ENCODE measurements at regions of chr12 and their contacts with region 1.

Region 1: GRCh38 chr12:121005346-121005815 is 10.9 kb downstream of the C12orf43 start:
- DNase-seq: peak; percentile 84
- ATAC-seq: peak; percentile 78
- H3K4me3 Mint-ChIP-seq: no peak overlapping the region
- H3K27ac Mint-ChIP-seq: peak overlapping the region; percentile 87
- H3K4me1 Mint-ChIP-seq: peaks cover 2% of the 10 kb centered on the region; the same call in 1 of the 2 replicates
- H3K27me3 Mint-ChIP-seq: no peaks in the 10 kb centered on the region
- CTCF ChIP-seq: peak; percentile 80

Region 2: DNA sequence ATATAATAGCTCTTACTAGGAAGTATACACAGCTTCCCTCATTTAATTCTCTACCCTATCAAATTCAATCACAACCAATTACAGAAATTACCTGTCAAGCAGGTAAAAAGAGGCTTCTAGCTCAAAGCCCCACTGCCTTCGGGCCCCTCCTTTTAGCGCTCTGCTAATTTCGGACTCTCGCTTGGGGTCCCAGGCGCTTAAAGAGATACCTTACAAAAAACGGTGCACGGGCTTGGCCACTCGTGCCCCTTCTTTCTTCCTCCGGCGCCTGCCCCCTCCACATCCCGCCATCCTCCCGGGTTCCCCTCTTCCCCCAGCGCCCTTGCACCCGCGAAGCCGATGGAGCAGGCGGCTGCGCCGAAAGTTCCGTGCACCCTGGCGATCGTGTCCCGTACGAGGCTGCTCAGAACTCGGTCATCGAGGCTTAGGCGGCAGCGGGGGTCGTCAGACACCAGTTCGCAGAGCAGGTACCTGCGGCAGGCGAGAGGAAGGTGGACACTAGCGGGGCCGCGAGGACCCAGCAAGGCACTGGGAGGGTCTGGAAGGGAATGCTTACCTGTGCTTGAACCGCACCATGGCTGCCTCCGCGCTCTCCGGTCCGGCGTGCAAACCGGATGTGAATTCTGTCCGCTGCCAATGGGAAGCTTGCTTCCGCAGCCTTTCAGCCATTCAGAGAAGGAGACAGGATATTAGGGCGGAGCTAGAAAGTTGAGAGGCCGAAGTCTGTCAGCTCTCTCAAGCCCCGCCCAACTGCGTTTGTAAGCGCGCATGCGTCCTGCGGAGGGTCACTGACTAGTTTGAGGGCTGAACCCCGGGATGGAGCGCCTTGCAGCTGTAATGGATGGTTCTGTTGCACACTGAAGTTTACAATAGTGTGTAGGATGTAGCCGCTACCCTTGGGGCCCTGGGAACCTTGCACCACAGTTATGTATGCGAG is 424.3 kb before region 1 on chr12 and contains the start of gene POP5:
- CTCF ChIA-PET with region 1: interaction called, 24 read pairs
- POLR2A ChIA-PET with region 1: no interaction called
- DNase-seq: peak; percentile 98
- ATAC-seq: peak; percentile 91
- H3K4me3 Mint-ChIP-seq: peak within 1 kb of the TSS; percentile 100
- H3K27ac Mint-ChIP-seq: peak within 1 kb of the TSS; percentile 95
- H3K4me1 Mint-ChIP-seq: peaks cover 24% of the 10 kb centered on the region
- H3K27me3 Mint-ChIP-seq: peaks cover 12% of the 10 kb centered on the region
- CTCF ChIP-seq: no peak
- total RNA-seq, gene POP5: 53.9 to 57.7 TPM (median 54.7 TPM) in 3 replicates

Region 3: GRCh38 chr12:120737557-120738251 is 267.7 kb before region 1 on chr12:
- CTCF ChIA-PET with region 1: interaction called, 20 read pairs
- POLR2A ChIA-PET with region 1: no interaction called
- DNase-seq: peak; percentile 69
- ATAC-seq: peak; percentile 92
- H3K4me3 Mint-ChIP-seq: no peak overlapping the region
- H3K27ac Mint-ChIP-seq: no peak overlapping the region
- H3K4me1 Mint-ChIP-seq: no peaks in the 10 kb centered on the region
- H3K27me3 Mint-ChIP-seq: no peaks in the 10 kb centered on the region
- CTCF ChIP-seq: peak; percentile 43; the same call in 1 of the 2 replicates

Region 4: GRCh38 chr12:120978296-120979219 is 26.8 kb before region 1 on chr12 and contains the start of gene HNF1A:
- CTCF ChIA-PET with region 1: interaction called, 35 read pairs
- POLR2A ChIA-PET with region 1: interaction called, 4 read pairs
- DNase-seq: no peak
- ATAC-seq: peak; percentile 17; the same call in 1 of the 2 replicates
- H3K4me3 Mint-ChIP-seq: no peak within 1 kb of the TSS
- H3K27ac Mint-ChIP-seq: no peak within 1 kb of the TSS
- H3K4me1 Mint-ChIP-seq: peaks cover 11% of the 10 kb centered on the region
- H3K27me3 Mint-ChIP-seq: no peaks in the 10 kb centered on the region
- CTCF ChIP-seq: no peak
- total RNA-seq, gene HNF1A: not detected in 3 replicates

Region 5: GRCh38 chr12:120994059-120994458 is 11.3 kb before region 1 on chr12:
- CTCF ChIA-PET with region 1: interaction called, 14 read pairs
- POLR2A ChIA-PET with region 1: no interaction called
- DNase-seq: no peak
- ATAC-seq: no peak
- H3K4me3 Mint-ChIP-seq: no peak overlapping the region
- H3K27ac Mint-ChIP-seq: no peak overlapping the region
- H3K4me1 Mint-ChIP-seq: peaks cover 2% of the 10 kb centered on the region
- H3K27me3 Mint-ChIP-seq: peaks cover 5% of the 10 kb centered on the region; the same call in 1 of the 2 replicates
- CTCF ChIP-seq: no peak

Region 6: DNA sequence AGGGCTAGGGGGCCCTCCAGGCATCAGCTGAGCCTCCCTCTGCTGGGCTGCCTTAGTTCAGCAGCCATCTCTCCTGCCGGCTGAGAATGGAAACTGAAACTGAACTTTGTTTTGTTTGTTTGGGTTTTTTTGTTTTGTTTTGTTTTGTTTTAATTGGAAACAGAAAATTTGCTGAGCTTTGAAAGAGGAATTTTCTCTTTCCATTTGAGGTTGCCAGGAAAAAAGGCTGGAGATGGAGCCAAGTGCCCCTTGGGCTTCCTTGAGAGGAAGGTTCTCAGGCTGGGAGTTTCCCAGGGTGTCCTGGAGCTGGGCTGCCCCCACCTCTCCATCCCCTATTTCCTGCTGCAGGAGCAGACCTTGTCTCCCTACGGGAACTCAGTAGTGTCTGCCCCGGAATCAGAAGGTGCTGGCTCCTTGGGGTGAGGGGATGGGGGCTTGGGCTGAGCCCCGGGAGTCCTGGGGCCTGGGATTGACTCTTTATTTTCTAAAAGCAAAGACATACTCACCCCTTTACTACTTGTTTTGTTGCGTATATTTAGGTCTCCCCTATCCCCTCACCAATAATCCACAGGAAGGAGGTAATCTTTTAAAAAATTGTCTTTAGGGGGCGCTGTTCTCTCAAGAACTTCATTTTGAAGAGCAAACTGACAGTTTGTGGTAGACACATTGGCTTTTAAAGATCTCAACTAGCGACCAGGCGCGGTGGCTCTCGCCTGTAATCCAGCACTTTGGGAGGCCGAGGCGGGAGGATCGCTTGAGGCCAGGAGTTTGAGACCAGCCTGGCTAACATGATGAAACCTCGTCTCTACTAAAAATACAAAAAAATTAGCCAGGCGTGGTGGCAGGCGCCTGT is 55.0 kb after region 1 on chr12:
- CTCF ChIA-PET with region 1: interaction called, 25 read pairs
- POLR2A ChIA-PET with region 1: no interaction called
- DNase-seq: peak; percentile 48
- ATAC-seq: peak; percentile 92
- H3K4me3 Mint-ChIP-seq: peak overlapping the region; percentile 56
- H3K27ac Mint-ChIP-seq: peak overlapping the region; percentile 91
- H3K4me1 Mint-ChIP-seq: peaks cover 3% of the 10 kb centered on the region
- H3K27me3 Mint-ChIP-seq: peaks cover 4% of the 10 kb centered on the region; the same call in 1 of the 2 replicates
- CTCF ChIP-seq: peak; percentile 67

Region 7: DNA sequence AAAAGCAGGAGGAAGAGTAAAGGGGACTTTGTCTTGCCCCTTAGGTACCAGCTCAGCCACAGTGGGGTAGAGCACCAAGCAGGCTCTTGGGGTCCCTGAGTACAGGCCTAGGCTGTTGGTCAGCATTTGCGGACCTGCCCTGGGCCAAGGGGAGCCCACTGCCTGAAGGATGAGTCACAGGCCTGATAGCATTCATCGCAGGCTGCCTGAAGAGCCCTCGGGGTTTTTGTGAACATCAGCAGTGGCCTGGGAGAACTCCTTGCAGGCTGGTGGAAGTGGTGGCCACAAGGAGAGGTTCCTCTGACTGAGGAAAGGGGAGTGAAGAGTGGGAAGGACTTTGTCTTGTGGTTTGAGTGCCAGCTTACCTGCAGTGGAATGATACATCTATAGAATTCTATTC is 102.3 kb after region 1 on chr12:
- CTCF ChIA-PET with region 1: interaction called, 11 read pairs
- POLR2A ChIA-PET with region 1: no interaction called
- DNase-seq: no peak
- ATAC-seq: no peak
- H3K4me3 Mint-ChIP-seq: no peak overlapping the region
- H3K27ac Mint-ChIP-seq: no peak overlapping the region
- H3K4me1 Mint-ChIP-seq: no peaks in the 10 kb centered on the region
- H3K27me3 Mint-ChIP-seq: no peaks in the 10 kb centered on the region
- CTCF ChIP-seq: no peak

Region 8: GRCh38 chr12:121144416-121144914 is 139.1 kb after region 1 on chr12:
- CTCF ChIA-PET with region 1: no interaction called
- POLR2A ChIA-PET with region 1: no interaction called
- DNase-seq: no peak
- ATAC-seq: no peak
- H3K4me3 Mint-ChIP-seq: no peak overlapping the region
- H3K27ac Mint-ChIP-seq: no peak overlapping the region
- H3K4me1 Mint-ChIP-seq: no peaks in the 10 kb centered on the region
- H3K27me3 Mint-ChIP-seq: no peaks in the 10 kb centered on the region; the same call in 1 of the 2 replicates
- CTCF ChIP-seq: no peak

Measured in WTC11 (cell line).